Naive thymus-derived CD4-positive, alpha-beta T cell (primary cell): ENCODE measurements at regions of chr5 and their contacts with region 1.

Region 1: DNA sequence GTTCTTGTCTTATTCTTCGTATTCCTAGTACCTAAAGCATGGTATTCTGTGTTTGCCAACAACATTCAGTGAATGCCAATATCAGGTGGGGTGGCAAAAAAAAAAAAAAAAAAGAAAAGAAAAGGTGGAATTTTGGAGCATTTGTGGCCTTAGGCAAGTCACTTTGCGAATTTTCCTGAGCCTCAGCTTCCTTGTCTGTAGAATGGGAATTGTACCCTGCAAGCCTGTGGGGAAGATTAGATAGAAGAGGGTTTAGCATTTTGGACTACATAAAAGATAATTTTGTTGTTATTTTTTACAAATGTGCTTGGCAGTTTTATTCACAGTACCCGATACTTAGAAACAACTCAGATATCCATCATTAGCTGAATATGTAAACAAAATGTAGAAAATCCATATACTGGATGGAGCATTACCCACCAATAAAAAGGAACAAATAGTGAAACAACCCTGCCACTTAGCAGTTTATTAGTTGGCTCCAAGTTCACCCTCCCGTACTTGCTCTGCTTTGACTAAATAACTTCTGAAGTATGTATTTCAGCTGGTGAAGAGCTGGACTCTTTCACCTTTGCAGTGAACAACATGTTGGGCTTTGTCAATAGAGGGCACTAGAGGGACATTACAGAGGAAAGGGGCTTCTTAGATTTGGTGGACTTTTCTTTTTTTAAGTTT is 13.6 kb downstream of the UBE2D2 start:
- DNase-seq: peak in 7 of 9 donors; percentile 27 to 60 (median 47)
- ATAC-seq: peak; percentile 75
- H3K4me3 ChIP-seq: no peak overlapping the region
- H3K4me3 Mint-ChIP-seq: peak overlapping the region in 9 of 10 donors; percentile 11 to 80 (median 53)
- H3K27ac ChIP-seq: peak overlapping the region; percentile 57
- H3K27ac Mint-ChIP-seq: peak overlapping the region; percentile 62 to 96 (median 90)
- H3K4me1 ChIP-seq: peaks cover 61 to 68% of the 10 kb centered on the region in 2 donors
- H3K4me1 Mint-ChIP-seq: peaks cover 56 to 88% (median 74%) of the 10 kb centered on the region in 7 donors
- H3K27me3 ChIP-seq: no peaks in the 10 kb centered on the region
- H3K27me3 Mint-ChIP-seq: no peaks in the 10 kb centered on the region

Region 2: DNA sequence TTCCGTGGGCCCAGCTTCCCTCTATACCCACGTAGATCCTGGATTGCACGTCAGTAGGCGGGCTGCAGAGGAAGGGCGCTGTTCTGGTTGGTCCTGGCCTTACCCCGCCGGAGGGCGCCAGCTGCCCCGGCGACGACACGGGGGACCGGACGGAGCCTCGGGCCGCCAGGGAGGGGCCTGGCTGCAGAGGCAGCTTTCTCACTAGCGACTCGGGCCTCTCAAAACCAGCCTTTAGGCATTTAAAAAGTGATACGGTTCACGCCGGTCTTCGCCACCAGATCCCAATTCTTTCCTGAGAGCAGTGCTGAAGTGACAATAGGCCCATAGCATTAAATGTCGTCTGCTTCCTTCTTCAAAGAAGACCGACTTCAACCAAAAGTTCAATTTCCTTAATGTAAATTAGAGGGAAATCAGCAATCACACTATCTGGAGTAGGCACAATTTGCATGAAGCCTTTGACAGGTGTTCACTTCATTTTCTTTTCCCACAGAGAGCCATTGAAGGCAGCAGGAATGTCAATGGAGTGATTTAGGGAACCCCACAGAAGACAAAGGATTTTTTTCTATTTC is 31.3 kb before region 1 on chr5:
- CTCF ChIA-PET with region 1: interaction called, 11 read pairs
- POLR2A ChIA-PET with region 1: no interaction called
- intact Hi-C with region 1: loop called in 1 of 2 experiments (anchors 2 kb)
- DNase-seq: peak; percentile 23 to 51 (median 47)
- ATAC-seq: peak; percentile 98
- H3K4me3 ChIP-seq: peak overlapping the region; percentile 32
- H3K4me3 Mint-ChIP-seq: peak overlapping the region; percentile 27 to 69 (median 62)
- H3K27ac ChIP-seq: peak overlapping the region; percentile 50
- H3K27ac Mint-ChIP-seq: peak overlapping the region in 7 of 9 donors; percentile 31 to 76 (median 54)
- H3K4me1 ChIP-seq: no peaks in the 10 kb centered on the region
- H3K4me1 Mint-ChIP-seq: peaks cover 1 to 13% (median 8%) of the 10 kb centered on the region in 7 donors
- H3K27me3 ChIP-seq: no peaks in the 10 kb centered on the region
- H3K27me3 Mint-ChIP-seq: no peaks in the 10 kb centered on the region

Region 3: GRCh38 chr5:139593716-139594319 is 19.0 kb after region 1 on chr5:
- CTCF ChIA-PET with region 1: interaction called, 8 read pairs
- POLR2A ChIA-PET with region 1: interaction called, 3 read pairs
- intact Hi-C with region 1: loop called in 1 of 2 experiments (anchors 2 kb)
- DNase-seq: no peak
- ATAC-seq: no peak
- H3K4me3 ChIP-seq: no peak overlapping the region
- H3K4me3 Mint-ChIP-seq: no peak overlapping the region
- H3K27ac ChIP-seq: peak overlapping the region; percentile 20
- H3K27ac Mint-ChIP-seq: peak overlapping the region in 1 of 9 donors; percentile 59
- H3K4me1 ChIP-seq: peaks cover 0 to 22% of the 10 kb centered on the region in 2 donors
- H3K4me1 Mint-ChIP-seq: peaks cover 39 to 73% (median 52%) of the 10 kb centered on the region in 7 donors
- H3K27me3 ChIP-seq: no peaks in the 10 kb centered on the region
- H3K27me3 Mint-ChIP-seq: no peaks in the 10 kb centered on the region

Region 4: GRCh38 chr5:139611703-139612584 is 37.2 kb after region 1 on chr5:
- CTCF ChIA-PET with region 1: interaction called, 4 read pairs
- POLR2A ChIA-PET with region 1: interaction called, 4 read pairs
- intact Hi-C with region 1: loop called (anchors 5 kb)
- DNase-seq: no peak
- ATAC-seq: no peak
- H3K4me3 ChIP-seq: no peak overlapping the region
- H3K4me3 Mint-ChIP-seq: no peak overlapping the region
- H3K27ac ChIP-seq: no peak overlapping the region
- H3K27ac Mint-ChIP-seq: peak overlapping the region in 8 of 9 donors; percentile 7 to 75 (median 56)
- H3K4me1 ChIP-seq: peaks cover 0 to 4% of the 10 kb centered on the region in 2 donors
- H3K4me1 Mint-ChIP-seq: peaks cover 7 to 48% (median 30%) of the 10 kb centered on the region in 7 donors
- H3K27me3 ChIP-seq: no peaks in the 10 kb centered on the region
- H3K27me3 Mint-ChIP-seq: no peaks in the 10 kb centered on the region

Region 5: GRCh38 chr5:139690064-139690802 is 115.5 kb after region 1 on chr5:
- CTCF ChIA-PET with region 1: no interaction called
- POLR2A ChIA-PET with region 1: no interaction called
- intact Hi-C with region 1: loop called in 1 of 2 experiments (anchors 5 kb)
- DNase-seq: peak in 2 of 9 donors; percentile 26 to 27
- ATAC-seq: peak; percentile 59
- H3K4me3 ChIP-seq: no peak overlapping the region
- H3K4me3 Mint-ChIP-seq: no peak overlapping the region
- H3K27ac ChIP-seq: no peak overlapping the region
- H3K27ac Mint-ChIP-seq: no peak overlapping the region
- H3K4me1 ChIP-seq: no peaks in the 10 kb centered on the region
- H3K4me1 Mint-ChIP-seq: peaks cover 3 to 17% (median 6%) of the 10 kb centered on the region in 7 donors
- H3K27me3 ChIP-seq: no peaks in the 10 kb centered on the region
- H3K27me3 Mint-ChIP-seq: peaks cover 0 to 17% (median 0%) of the 10 kb centered on the region in 5 donors